PC-9 (cell line): ENCODE measurements at regions of chr2 and their contacts with region 1.

Region 1: GRCh38 chr2:101113396-101114267 is 37.5 kb downstream of the TBC1D8 start:
- DNase-seq: peak; percentile 69 to 92
- H3K4me3 ChIP-seq: peak overlapping the region; percentile 43; the same call in 1 of the 2 replicates
- H3K27ac ChIP-seq: peak overlapping the region; percentile 88
- H3K4me1 ChIP-seq: peaks cover 80% of the 10 kb centered on the region
- H3K27me3 ChIP-seq: no peaks in the 10 kb centered on the region
- CTCF ChIP-seq: no peak

Region 2: DNA sequence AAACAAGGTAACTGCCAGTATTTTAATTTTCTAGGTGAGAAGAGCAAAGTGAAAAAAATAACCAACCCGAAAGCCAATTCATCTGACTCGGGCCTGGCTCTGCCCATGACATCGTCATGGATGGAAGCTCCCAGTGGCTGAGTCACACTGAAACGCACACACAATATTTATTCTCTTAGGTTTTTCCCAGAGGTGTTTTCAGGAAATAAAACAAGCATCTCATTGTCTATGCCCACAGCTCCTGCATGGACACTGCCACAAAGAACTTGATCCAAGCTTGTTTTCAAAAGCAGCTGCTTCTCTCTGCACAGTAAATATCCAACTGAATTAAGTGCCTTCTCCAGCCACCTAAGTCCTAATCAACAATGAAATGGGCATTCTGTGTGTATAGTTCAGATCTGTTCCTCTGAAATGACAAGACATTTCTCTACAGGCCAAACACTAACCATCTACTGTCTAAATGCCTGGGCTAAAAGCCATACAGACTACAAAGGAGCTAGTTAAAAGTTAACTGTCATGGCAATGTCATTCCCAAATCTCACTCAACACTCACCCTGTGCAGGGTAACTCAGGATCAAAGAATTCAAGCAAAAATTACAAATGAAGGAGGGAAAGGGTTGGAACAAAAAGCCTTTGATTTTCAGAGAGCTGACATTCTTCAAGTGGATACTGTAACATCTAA is 48.6 kb before region 1 on chr2:
- CTCF ChIA-PET with region 1: no interaction called
- POLR2A ChIA-PET with region 1: no interaction called
- intact Hi-C with region 1: loop called (anchors 2 kb)
- DNase-seq: peak; percentile 34 to 76
- H3K4me3 ChIP-seq: no peak overlapping the region
- H3K27ac ChIP-seq: peak overlapping the region; percentile 66
- H3K4me1 ChIP-seq: peaks cover 18% of the 10 kb centered on the region
- H3K27me3 ChIP-seq: no peaks in the 10 kb centered on the region
- CTCF ChIP-seq: no peak

Region 3: DNA sequence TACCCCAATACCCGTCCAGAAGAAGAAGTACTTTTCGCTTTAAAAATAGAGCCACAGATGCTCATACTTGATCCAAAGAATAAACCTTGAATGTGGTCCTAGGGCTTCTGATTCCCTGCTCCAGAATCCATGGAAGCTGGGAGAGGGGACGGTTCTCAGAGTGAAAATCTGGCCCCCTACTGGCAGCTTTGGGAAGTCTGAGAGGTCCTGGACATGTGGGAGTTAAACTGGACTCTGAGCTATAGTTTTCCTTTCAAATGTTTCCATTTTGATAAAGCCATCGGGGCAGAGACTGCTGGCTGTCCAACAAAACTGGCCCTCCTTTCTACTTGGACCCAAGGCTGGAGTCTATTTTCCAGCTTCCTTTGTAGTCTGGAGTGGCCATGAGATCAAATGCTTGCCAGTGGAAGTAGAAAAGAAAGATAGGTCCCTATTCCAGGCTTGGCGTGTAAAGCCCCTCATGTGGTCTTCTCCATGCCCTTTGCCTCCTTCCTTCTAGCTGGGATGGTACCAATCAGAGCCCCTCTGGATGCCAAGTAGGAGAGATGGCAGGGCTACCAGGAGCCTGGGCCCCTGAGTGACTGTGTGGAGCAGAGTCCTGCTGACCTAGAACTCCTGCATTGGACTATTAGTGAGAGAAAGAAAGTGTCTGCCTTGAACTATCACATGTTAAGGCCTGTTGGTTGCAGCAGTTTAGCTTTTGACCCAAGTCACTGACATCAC is 75.2 kb after region 1 on chr2:
- CTCF ChIA-PET with region 1: no interaction called
- POLR2A ChIA-PET with region 1: no interaction called
- intact Hi-C with region 1: no loop called
- DNase-seq: no peak
- H3K4me3 ChIP-seq: no peak overlapping the region
- H3K27ac ChIP-seq: no peak overlapping the region
- H3K4me1 ChIP-seq: peaks cover 9% of the 10 kb centered on the region
- H3K27me3 ChIP-seq: no peaks in the 10 kb centered on the region
- CTCF ChIP-seq: peak; percentile 69